Activated CD4-positive, alpha-beta memory T cell treated with anti-CD3 and anti-CD28 coated beads for 36 hours (primary cell): ENCODE measurements at regions of chr16 and their contacts with region 1.

Region 1: GRCh38 chr16:68843482-68844210 is at the start of gene TANGO6:
- DNase-seq: peak; percentile 96
- H3K4me3 Mint-ChIP-seq: peak within 1 kb of the TSS; percentile 95
- H3K27ac Mint-ChIP-seq: peak within 1 kb of the TSS; percentile 85
- H3K4me1 Mint-ChIP-seq: peaks cover 25% of the 10 kb centered on the region
- H3K27me3 Mint-ChIP-seq: no peaks in the 10 kb centered on the region
- total RNA-seq, gene TANGO6: 25.2 to 25.7 TPM

Region 2: GRCh38 chr16:68668266-68668665 is 175.4 kb before region 1 on chr16:
- CTCF ChIA-PET with region 1: interaction called, 6 read pairs
- POLR2A ChIA-PET with region 1: no interaction called
- intact Hi-C with region 1: loop called (anchors 2 kb)
- DNase-seq: peak; percentile 65
- H3K4me3 Mint-ChIP-seq: no peak overlapping the region
- H3K27ac Mint-ChIP-seq: peak overlapping the region; percentile 75
- H3K4me1 Mint-ChIP-seq: peaks cover 24% of the 10 kb centered on the region
- H3K27me3 Mint-ChIP-seq: peaks cover 2% of the 10 kb centered on the region

Region 3: DNA sequence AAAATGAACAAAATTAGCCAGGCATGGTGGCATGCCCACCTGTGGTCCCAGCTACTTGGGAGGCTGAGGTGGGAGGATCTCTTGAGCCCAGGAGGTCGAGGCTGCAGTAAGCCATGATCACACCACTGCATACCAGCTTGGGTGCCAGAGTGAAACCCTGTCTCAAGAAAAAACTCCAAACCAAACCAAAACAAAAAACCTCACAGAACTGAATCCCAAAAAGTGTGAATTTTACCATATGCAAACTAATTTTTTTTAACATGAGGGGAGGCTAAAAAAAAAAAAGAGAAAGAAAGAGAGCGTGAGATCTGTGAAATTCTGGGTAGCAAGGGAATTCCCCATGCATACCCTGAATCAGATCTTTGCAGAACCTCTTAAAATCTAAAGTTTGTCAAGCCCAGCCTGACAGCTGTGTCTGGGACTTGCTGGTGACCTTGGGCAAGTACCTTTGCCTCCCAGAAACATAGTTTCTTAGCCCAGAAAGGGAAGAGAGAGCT is 123.6 kb before region 1 on chr16:
- CTCF ChIA-PET with region 1: no interaction called
- POLR2A ChIA-PET with region 1: no interaction called
- intact Hi-C with region 1: loop called (anchors 1 kb)
- DNase-seq: peak; percentile 64
- H3K4me3 Mint-ChIP-seq: no peak overlapping the region
- H3K27ac Mint-ChIP-seq: peak overlapping the region; percentile 84
- H3K4me1 Mint-ChIP-seq: peaks cover 19% of the 10 kb centered on the region
- H3K27me3 Mint-ChIP-seq: no peaks in the 10 kb centered on the region

Region 4: DNA sequence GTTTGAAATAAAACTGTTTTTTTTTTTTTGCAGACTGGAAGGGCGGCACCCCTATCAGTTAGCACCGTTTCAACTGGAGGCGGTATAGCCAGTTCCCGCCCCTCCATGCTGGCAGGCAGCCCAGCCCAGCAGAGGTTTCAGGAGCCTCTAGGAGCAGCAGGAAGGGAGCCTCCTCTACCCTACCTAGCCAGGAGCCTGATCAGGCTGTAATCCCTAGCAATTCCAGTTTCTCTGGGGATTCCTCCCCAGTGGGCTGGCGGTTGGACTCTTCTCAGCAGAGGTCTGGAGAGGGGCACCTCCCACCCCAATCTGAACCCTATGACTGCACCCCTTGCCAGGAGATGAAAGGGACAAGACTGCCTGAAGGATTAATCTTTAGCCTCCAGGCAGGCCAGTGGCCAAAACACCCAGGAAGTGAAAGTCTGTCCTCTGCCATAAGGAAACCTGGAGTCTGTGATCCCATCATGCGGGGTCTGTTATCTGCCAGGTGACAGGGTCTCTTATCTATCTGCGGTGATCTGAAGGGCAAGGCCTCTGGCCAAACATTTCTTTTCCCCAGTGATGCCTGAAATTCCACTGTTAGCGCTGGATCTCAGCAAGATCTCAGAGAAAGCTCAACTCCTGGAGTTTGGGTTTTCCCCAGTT is 111.5 kb before region 1 on chr16:
- CTCF ChIA-PET with region 1: no interaction called
- POLR2A ChIA-PET with region 1: no interaction called
- intact Hi-C with region 1: no loop called
- DNase-seq: no peak
- H3K4me3 Mint-ChIP-seq: no peak overlapping the region
- H3K27ac Mint-ChIP-seq: no peak overlapping the region
- H3K4me1 Mint-ChIP-seq: peaks cover 3% of the 10 kb centered on the region
- H3K27me3 Mint-ChIP-seq: peaks cover 18% of the 10 kb centered on the region

Region 5: GRCh38 chr16:68743664-68744063 is 100.0 kb before region 1 on chr16:
- CTCF ChIA-PET with region 1: no interaction called
- POLR2A ChIA-PET with region 1: no interaction called
- intact Hi-C with region 1: no loop called
- DNase-seq: no peak
- H3K4me3 Mint-ChIP-seq: no peak overlapping the region
- H3K27ac Mint-ChIP-seq: no peak overlapping the region
- H3K4me1 Mint-ChIP-seq: peaks cover 4% of the 10 kb centered on the region
- H3K27me3 Mint-ChIP-seq: peaks cover 11% of the 10 kb centered on the region

Region 6: DNA sequence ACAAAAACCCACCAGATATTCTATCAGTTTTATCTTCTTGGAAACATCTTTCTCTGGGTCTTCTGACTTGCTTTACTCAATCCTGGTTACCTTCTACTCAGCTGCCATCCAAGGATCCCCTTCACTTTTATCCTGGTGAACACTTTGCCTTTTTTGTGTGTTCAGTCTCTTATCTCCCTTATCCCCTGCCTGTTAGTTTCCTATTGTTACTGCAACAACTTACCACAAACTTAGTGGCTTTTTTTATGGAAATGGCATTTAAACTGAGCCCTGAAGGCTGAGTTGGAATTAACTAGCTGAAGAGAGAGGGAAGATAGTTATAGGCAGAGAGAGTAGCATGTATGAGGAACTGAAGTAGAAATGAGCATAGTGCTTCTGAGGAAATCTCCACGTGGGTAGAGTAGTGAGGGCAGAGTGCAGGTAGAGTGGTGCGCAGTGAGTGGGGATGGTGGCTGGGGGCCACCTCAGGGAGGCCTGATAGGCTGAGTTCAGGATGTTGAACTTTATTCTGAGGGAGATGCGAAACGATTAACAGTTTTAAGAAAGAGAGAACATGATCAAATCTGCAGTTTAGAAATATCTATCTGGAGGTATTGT is 25.9 kb after region 1 on chr16:
- CTCF ChIA-PET with region 1: no interaction called
- POLR2A ChIA-PET with region 1: no interaction called
- intact Hi-C with region 1: no loop called
- DNase-seq: no peak
- H3K4me3 Mint-ChIP-seq: no peak overlapping the region
- H3K27ac Mint-ChIP-seq: no peak overlapping the region
- H3K4me1 Mint-ChIP-seq: no peaks in the 10 kb centered on the region
- H3K27me3 Mint-ChIP-seq: no peaks in the 10 kb centered on the region

Region 7: DNA sequence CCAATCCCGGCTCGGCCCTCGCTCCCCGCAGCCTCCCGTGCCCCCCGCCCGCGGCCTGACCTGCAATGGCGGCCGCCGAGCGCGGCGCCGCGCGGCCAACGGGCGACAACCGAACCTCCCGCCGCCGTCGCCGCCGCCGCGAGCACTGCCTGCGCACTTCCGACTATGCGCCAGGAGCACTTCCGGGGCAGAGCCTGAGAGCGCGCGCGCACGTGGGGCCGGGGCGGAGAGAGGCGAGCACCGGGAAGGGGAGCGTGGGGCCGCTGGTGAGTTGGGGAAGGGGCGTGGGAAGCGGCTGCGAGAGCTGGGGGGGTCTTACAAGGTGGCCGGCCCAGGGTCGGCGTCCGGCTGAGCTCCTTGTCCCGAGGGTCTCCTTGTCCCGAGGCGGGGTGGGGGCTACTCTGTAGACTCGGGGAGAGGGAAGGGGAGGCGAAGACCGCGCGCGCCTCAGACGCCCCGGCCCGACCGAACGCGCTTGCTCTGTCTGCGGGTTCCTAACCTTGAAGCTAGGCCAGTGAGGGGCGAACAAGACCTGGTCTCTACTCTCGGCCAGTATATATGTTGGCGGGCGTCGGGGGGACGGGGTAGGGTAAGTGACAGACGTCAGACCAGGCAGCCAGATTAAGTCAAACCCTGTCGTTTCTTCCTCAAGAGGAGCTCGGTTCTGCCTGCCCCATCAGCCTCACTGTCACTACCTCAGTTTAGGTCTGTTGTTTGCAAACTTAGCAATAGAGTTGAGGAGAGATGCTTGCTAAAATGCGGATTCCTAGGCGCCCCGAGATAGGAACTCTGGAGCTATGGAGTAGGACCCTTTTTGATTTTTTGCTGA is 289.0 kb after region 1 on chr16 and contains the starts of genes CHTF8 and UTP4:
- CTCF ChIA-PET with region 1: interaction called, 3 read pairs
- POLR2A ChIA-PET with region 1: interaction called, 4 read pairs
- intact Hi-C with region 1: loop called (anchors 2 kb)
- DNase-seq: peak; percentile 91
- H3K4me3 Mint-ChIP-seq: peak within 1 kb of the TSS; percentile 97
- H3K27ac Mint-ChIP-seq: peak within 1 kb of the TSS; percentile 91
- H3K4me1 Mint-ChIP-seq: peaks cover 64% of the 10 kb centered on the region
- H3K27me3 Mint-ChIP-seq: no peaks in the 10 kb centered on the region
- total RNA-seq, gene CHTF8: 120 to 132 TPM
- total RNA-seq, gene UTP4: 104 to 106 TPM